Astrocyte of the spinal cord (primary cell): ENCODE measurements at regions of chr2 and their contacts with region 1.

Region 1: DNA sequence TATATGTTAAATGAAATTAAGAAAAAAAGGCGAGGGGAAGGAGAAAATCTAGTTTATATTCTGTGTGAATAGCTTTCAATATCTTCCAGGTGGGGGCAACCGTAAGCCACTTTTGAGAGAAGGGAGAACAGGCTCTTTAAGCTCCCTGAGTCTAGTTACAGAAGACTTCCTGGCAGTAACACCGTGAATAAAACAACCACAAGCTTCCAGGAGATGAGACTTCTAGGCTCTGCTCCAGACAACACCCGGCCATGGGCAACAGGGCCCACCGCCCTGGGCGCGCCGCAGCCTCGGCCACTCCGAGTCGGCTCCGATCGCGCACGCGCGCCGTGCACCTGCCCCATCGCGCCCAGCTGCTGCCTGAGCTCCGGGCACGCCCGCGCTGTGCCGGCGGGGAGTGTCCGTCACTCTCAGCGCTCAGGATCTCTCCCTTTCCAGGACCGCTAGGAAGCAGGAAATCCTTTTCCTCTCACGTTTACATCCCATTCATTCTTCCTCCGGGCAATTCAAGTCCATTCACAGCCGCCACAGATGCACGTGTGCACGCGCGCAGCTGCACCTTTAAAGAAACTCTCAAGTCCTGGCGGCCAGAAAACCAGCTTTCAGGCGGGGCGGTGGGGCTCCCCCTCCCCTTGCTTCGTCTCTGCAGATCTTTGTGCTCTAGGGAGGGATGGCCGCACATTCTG is 19.4 kb upstream of the PAX3 start:
- DNase-seq: peak; percentile 81
- H3K4me3 ChIP-seq: peak overlapping the region; percentile 39
- CTCF ChIP-seq: peak; percentile 45

Region 2: GRCh38 chr2:222024932-222025880 is 293.0 kb before region 1 on chr2:
- in situ Hi-C with region 1: loop called (anchors 25 kb)
- DNase-seq: peak; percentile 59
- H3K4me3 ChIP-seq: no peak overlapping the region
- CTCF ChIP-seq: peak; percentile 76